MCF 10A (cell line): ENCODE measurements at regions of chr17 and their contacts with region 1.

Region 1: DNA sequence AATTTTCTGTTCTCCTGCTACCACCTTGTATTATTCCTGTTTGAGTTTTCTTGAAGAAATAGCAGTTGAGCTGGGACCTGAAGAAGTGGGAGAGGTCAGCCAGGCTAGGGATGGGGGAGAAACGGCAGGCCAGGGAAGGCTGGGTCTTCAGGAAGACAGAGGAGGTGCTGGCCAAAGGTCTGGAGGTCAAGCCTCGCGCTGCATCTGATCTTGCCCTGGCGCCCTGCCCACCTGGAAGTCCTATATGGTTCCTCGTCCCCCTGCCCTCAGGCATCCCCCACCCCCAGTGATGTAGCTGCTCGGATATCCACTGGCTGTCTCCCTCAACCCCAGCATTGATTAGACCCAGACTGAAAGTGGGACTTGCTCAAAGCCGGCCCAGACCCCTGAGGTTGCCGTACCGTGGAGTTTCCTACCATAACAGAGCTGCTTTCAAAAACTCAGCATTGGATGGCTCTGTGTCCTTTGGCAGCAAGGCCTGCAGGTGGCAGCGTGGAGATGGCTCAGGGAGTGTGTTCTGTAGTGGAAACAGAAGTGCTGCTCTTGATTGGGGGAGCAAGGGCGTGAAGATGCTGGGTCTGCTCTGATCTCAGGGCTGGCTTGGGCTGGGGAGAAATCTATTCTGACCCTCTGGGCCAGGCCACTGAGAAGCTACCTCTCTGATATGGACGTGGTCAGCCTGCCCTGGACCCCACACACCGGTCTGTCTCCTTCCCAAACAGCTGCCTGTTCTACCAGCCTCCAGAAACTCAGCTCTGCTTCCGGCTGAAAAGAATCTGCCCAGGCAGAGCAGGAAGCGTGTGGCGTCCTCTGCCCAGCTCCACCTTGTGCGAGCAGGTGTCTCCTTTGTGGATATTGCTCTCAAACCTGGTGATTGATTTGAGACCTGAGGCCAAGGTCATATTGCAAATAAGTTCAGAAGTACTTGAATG is 107.0 kb upstream of the CACNG5 start:
- DNase-seq: peak; percentile 54
- H3K4me3 Mint-ChIP-seq: no peak overlapping the region
- H3K27ac Mint-ChIP-seq: no peak overlapping the region
- H3K4me1 Mint-ChIP-seq: no peaks in the 10 kb centered on the region
- H3K27me3 Mint-ChIP-seq: no peaks in the 10 kb centered on the region
- CTCF ChIP-seq: peak; percentile 60

Region 2: DNA sequence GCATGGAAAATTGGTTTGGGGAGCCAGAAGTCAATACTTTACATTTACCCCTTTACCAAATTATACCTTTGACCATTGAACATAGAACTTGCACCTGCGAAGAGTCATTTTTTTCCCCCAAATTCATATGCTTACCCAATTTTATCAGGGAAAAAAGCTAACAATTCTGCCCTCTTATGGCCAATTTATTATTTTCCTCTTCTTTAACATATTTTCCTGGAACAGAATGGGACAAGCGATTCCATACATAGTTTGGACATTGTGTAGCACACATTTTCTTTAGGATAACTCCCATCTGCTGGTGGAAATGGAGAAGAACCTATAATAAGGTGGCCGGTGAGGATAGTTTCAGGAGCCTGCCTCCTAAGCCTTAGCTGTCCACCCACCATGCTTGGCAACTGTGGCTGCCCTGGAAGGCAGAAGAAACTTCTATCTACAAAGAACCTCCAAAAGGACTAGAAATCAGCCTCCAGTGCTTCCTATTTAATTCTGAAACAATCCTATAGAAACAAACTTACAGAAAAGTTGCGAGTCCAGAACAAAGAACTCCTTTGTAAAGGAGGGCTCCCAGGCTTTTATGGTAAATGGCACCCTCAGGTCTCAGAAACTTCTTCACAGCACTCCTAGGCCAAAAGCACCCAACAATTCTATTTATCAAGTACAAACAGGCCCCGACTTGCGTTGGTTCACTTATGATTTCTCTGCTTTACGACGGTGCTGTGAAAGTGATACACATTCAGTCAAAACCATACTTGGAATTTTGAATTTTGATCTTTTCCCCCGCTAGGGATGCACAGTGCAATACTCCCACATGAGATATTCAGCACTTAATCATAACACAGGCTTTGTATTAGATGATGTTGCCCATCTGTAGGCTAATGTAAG is 172.5 kb after region 1 on chr17:
- CTCF ChIA-PET with region 1: interaction called, 32 read pairs
- POLR2A ChIA-PET with region 1: no interaction called
- intact Hi-C with region 1: no loop called
- DNase-seq: peak; percentile 38
- H3K4me3 Mint-ChIP-seq: no peak overlapping the region
- H3K27ac Mint-ChIP-seq: no peak overlapping the region
- H3K4me1 Mint-ChIP-seq: peaks cover 8% of the 10 kb centered on the region
- H3K27me3 Mint-ChIP-seq: peaks cover 16% of the 10 kb centered on the region
- CTCF ChIP-seq: no peak

Region 3: GRCh38 chr17:66906321-66907278 is 178.7 kb after region 1 on chr17:
- CTCF ChIA-PET with region 1: interaction called, 24 read pairs
- POLR2A ChIA-PET with region 1: no interaction called
- intact Hi-C with region 1: no loop called
- DNase-seq: peak; percentile 86
- H3K4me3 Mint-ChIP-seq: no peak overlapping the region
- H3K27ac Mint-ChIP-seq: no peak overlapping the region
- H3K4me1 Mint-ChIP-seq: peaks cover 19% of the 10 kb centered on the region
- H3K27me3 Mint-ChIP-seq: no peaks in the 10 kb centered on the region
- CTCF ChIP-seq: peak; percentile 88

Region 4: GRCh38 chr17:67157732-67158639 is 430.1 kb after region 1 on chr17:
- CTCF ChIA-PET with region 1: no interaction called
- POLR2A ChIA-PET with region 1: no interaction called
- intact Hi-C with region 1: loop called (anchors 5 kb)
- DNase-seq: peak; percentile 40
- H3K4me3 Mint-ChIP-seq: no peak overlapping the region
- H3K27ac Mint-ChIP-seq: peak overlapping the region; percentile 4
- H3K4me1 Mint-ChIP-seq: peaks cover 17% of the 10 kb centered on the region
- H3K27me3 Mint-ChIP-seq: no peaks in the 10 kb centered on the region
- CTCF ChIP-seq: no peak